Activated CD4-positive, alpha-beta T cell treated with anti-CD3 and anti-CD28 coated beads for 36 hours (primary cell): ENCODE measurements at regions of chr11 and their contacts with region 1.

Region 1: DNA sequence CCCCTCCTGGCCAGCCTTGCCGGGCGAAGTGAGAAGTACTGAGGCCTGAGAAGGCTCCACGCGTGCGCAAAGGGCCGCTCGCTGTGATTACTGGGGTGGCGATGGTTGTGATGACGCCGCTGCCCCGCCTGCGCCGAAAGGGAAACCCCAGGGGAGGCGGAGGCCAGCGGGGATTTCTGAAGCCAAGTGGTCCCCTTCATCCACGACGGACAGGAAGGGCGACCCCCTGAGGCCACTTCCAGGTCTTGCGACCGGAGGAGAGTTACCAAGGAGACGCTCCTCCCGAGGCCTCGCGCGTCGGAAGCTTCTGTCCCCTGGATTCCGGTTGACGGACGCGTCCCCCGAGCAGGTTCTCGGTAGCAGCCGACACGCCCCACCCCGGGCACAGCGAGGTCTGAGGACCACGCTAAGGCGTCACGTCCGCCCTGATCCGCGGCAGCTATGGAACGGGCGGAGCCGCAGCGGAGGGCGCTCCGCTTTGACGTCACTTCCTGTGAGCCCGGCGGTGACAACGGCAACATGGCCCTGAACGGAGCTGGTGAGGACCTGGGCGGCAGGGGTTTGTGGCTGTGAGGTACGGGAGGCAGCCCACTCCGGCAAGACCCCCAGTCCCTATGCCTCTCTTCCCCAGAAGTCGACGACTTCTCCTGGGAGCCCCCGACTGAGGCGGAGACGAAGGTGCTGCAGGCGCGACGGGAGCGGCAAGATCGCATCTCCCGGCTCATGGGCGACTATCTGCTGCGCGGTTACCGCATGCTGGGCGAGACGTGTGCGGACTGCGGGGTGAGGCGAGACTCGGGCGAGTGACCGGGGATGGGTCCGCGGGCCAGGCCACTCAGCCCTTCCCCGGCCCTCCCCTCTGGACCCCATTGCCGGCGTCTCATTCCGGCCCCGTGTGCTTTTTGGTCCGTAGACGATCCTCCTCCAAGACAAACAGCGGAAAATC is at the start of gene ZNRD2:
- DNase-seq: peak; percentile 100
- ATAC-seq: peak; percentile 75
- H3K4me3 Mint-ChIP-seq: peak within 1 kb of the TSS; percentile 97
- H3K27ac Mint-ChIP-seq: peak within 1 kb of the TSS; percentile 96
- H3K4me1 Mint-ChIP-seq: peaks cover 60% of the 10 kb centered on the region
- H3K27me3 Mint-ChIP-seq: no peaks in the 10 kb centered on the region
- total RNA-seq, gene ZNRD2: 50.7 to 56.4 TPM

Region 2: DNA sequence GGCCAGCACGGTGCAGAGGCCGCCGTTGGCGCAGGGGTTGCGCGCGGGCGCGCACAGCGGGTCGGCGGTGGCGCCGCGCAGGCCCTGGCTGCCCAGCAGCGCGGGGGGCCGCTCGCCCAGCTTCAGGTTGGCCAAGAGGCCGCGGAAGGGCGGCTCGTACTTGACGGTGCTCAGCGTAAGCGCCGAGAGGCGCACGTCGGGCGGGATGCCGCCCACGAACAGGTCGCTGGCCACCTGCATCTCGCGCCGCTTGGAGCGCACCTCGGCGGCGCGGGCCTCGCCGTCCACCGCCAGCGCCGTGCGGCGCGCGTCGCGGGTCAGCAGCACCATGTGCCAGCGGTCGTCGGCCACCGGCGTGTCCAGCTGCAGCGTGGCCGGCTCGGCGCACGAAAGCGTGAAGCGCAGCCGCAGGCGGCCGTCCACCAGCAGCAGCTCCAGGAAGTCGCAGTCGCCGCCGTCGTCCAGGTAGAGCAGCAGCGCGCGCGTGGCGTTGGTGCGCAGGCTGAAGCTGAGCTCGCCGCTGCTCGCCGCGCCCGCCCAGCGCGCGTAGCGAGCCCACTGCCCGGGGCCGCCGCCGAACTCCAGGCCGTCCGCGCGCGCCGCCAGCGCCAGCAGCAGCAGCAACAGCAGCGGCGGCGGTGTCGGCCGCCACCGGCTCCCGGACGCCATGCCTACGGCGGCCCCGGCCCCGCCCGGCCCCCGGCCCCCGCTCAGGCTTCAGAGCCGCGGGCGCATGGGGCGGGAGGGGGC is 857.0 kb before region 1 on chr11:
- CTCF ChIA-PET with region 1: no interaction called
- POLR2A ChIA-PET with region 1: no interaction called
- intact Hi-C with region 1: no loop called
- DNase-seq: peak; percentile 38
- ATAC-seq: peak; percentile 21
- H3K4me3 Mint-ChIP-seq: no peak overlapping the region
- H3K27ac Mint-ChIP-seq: no peak overlapping the region
- H3K4me1 Mint-ChIP-seq: peaks cover 13% of the 10 kb centered on the region
- H3K27me3 Mint-ChIP-seq: peaks cover 69% of the 10 kb centered on the region

Region 3: DNA sequence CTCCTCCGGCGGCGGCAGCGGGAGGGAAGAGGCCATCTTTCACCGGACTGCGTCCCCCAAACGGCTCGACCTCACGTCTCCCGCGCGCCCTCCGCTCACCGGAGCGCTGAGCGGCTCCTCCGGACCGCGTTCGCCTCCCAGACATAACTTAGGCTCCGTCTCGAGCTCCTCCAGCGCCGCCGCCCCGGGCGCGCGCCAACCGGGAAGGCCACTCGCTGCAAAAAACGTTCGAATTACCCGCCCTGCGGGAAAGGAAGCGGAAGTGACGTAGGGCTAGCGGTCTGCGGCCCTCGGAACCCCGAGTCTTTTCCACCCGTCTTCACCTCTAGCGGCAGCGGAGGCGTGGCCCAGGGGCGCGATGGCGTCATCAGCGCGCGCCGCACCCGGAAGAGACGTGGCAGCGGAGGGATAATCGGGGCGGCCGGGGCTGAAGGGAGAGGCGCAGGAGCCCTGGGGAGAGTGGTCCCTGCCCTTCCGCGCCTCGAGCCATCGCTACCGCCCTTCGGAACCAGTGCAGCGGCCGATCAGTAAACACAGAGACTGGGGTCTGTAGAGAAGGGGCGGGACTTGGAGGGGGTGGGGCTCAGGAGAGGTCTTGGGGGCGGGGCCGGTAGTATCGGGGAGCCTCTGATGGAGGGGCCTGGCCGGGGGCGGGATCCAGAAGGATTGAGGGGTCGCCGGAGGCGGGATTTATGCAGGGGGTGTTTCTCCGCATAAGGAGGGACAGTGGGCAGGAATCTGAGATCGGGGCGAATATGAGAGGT is 486.2 kb before region 1 on chr11 and contains the starts of genes CDCA5 and ZFPL1:
- CTCF ChIA-PET with region 1: no interaction called
- POLR2A ChIA-PET with region 1: no interaction called
- intact Hi-C with region 1: loop called in 1 of 2 experiments (anchors 1 kb)
- DNase-seq: peak; percentile 97
- ATAC-seq: peak; percentile 81
- H3K4me3 Mint-ChIP-seq: peak within 1 kb of the TSS; percentile 99
- H3K27ac Mint-ChIP-seq: peak within 1 kb of the TSS; percentile 98
- H3K4me1 Mint-ChIP-seq: peaks cover 41% of the 10 kb centered on the region
- H3K27me3 Mint-ChIP-seq: no peaks in the 10 kb centered on the region
- total RNA-seq, gene CDCA5: 111 to 119 TPM
- total RNA-seq, gene ZFPL1: 24.2 to 31.8 TPM

Region 4: GRCh38 chr11:65425105-65425970 is 144.9 kb before region 1 on chr11:
- CTCF ChIA-PET with region 1: interaction called, 5 read pairs
- POLR2A ChIA-PET with region 1: interaction called, 7 read pairs
- intact Hi-C with region 1: loop called (anchors 1 to 2 kb)
- DNase-seq: peak; percentile 87
- ATAC-seq: peak; percentile 18
- H3K4me3 Mint-ChIP-seq: peak overlapping the region; percentile 100
- H3K27ac Mint-ChIP-seq: peak overlapping the region; percentile 99
- H3K4me1 Mint-ChIP-seq: peaks cover 51% of the 10 kb centered on the region
- H3K27me3 Mint-ChIP-seq: peaks cover 6% of the 10 kb centered on the region

Region 5: GRCh38 chr11:65551572-65552398 is 18.5 kb before region 1 on chr11:
- CTCF ChIA-PET with region 1: interaction called, 16 read pairs
- POLR2A ChIA-PET with region 1: interaction called, 4 read pairs
- intact Hi-C with region 1: loop called (anchors 1 to 2 kb)
- DNase-seq: peak; percentile 79
- ATAC-seq: peak; percentile 51
- H3K4me3 Mint-ChIP-seq: no peak overlapping the region
- H3K27ac Mint-ChIP-seq: peak overlapping the region; percentile 59
- H3K4me1 Mint-ChIP-seq: peaks cover 70% of the 10 kb centered on the region
- H3K27me3 Mint-ChIP-seq: no peaks in the 10 kb centered on the region

Region 6: DNA sequence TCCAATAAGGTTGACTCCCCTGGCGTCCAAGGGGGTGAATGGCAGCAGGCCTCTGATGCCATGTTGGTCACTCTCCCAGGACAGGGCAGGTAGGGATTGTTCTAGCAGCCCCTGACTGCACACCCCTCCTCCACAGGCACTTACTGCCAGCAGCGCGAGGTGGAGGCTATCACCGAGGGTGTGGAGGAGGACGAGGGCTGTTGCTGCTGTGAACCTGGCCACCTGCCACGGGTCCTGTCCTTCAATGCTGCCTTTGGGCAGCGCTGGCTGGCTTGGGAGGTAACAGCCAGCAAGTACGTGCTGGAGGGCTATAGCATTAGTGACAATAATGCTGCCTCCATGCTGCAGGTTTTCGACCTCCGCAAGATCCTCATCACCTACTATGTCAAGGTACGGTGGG is 60.0 kb after region 1 on chr11:
- CTCF ChIA-PET with region 1: no interaction called
- POLR2A ChIA-PET with region 1: no interaction called
- intact Hi-C with region 1: no loop called
- DNase-seq: no peak
- ATAC-seq: no peak
- H3K4me3 Mint-ChIP-seq: no peak overlapping the region
- H3K27ac Mint-ChIP-seq: no peak overlapping the region
- H3K4me1 Mint-ChIP-seq: peaks cover 4% of the 10 kb centered on the region
- H3K27me3 Mint-ChIP-seq: no peaks in the 10 kb centered on the region

Region 7: GRCh38 chr11:65662799-65663638 is 92.8 kb after region 1 on chr11 and contains the start of gene RELA:
- CTCF ChIA-PET with region 1: interaction called, 4 read pairs
- POLR2A ChIA-PET with region 1: no interaction called
- intact Hi-C with region 1: loop called (anchors 1 to 5 kb)
- DNase-seq: peak; percentile 96
- ATAC-seq: peak; percentile 90
- H3K4me3 Mint-ChIP-seq: peak within 1 kb of the TSS; percentile 88
- H3K27ac Mint-ChIP-seq: peak within 1 kb of the TSS; percentile 97
- H3K4me1 Mint-ChIP-seq: peaks cover 41% of the 10 kb centered on the region
- H3K27me3 Mint-ChIP-seq: no peaks in the 10 kb centered on the region
- total RNA-seq, gene RELA: 76.9 to 109 TPM

Region 8: GRCh38 chr11:65776196-65776595 is 205.9 kb after region 1 on chr11:
- CTCF ChIA-PET with region 1: no interaction called
- POLR2A ChIA-PET with region 1: no interaction called
- intact Hi-C with region 1: no loop called
- DNase-seq: no peak
- ATAC-seq: no peak
- H3K4me3 Mint-ChIP-seq: no peak overlapping the region
- H3K27ac Mint-ChIP-seq: peak overlapping the region; percentile 51
- H3K4me1 Mint-ChIP-seq: peaks cover 27% of the 10 kb centered on the region
- H3K27me3 Mint-ChIP-seq: no peaks in the 10 kb centered on the region

Region 9: DNA sequence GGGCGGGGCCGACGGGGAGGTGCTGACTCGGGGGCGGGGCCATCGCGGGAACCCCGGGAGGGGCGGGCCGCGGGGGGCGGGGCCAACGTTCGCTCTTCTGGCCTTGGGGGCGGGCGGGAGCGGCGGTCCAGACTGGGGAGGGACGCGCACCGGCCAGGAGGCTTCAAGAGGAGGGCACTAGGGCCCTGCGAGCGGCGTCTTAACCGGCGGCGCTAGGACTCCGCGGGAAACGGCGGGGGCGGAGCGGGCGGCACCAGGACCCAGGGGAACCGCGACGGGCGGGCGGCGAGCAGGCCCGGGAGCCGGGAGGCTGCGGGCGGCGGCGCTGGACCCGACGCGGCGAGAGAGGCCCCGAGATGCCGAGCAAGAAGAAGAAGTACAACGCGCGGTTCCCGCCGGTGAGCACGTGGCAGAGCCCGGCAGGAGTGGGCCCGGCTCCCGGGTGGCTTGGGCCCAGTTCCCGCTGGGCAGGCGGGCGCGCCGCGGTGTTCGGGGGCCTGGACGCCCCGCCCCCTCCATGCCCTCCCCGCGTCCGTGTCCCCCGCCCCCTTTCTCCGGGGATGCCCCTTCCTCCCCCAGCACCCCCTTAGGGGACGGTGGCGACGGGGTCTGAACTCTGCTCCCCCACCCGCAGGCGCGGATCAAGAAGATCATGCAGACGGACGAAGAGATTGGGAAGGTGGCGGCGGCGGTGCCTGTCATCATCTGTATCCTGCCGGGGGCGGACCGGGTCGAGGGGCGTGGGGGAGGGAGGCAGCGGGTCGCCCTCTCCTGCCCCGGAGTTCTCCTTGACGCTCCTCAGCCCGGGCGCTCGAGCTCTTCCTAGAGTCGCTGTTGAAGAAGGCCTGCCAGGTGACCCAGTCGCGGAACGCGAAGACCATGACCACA is 349.1 kb after region 1 on chr11 and contains the start of gene DRAP1:
- CTCF ChIA-PET with region 1: no interaction called
- POLR2A ChIA-PET with region 1: no interaction called
- intact Hi-C with region 1: loop called in 1 of 2 experiments (anchors 2 kb)
- DNase-seq: peak; percentile 100
- ATAC-seq: peak; percentile 94
- H3K4me3 Mint-ChIP-seq: peak within 1 kb of the TSS; percentile 91
- H3K27ac Mint-ChIP-seq: peak within 1 kb of the TSS; percentile 88
- H3K4me1 Mint-ChIP-seq: peaks cover 35% of the 10 kb centered on the region
- H3K27me3 Mint-ChIP-seq: no peaks in the 10 kb centered on the region
- total RNA-seq, gene DRAP1: 111 to 158 TPM

Region 10: GRCh38 chr11:66288671-66289547 is 718.7 kb after region 1 on chr11 and contains the start of gene YIF1A:
- CTCF ChIA-PET with region 1: no interaction called
- POLR2A ChIA-PET with region 1: no interaction called
- intact Hi-C with region 1: loop called in 1 of 2 experiments (anchors 2 kb)
- DNase-seq: peak; percentile 99
- ATAC-seq: peak; percentile 97
- H3K4me3 Mint-ChIP-seq: peak within 1 kb of the TSS; percentile 89
- H3K27ac Mint-ChIP-seq: peak within 1 kb of the TSS; percentile 85
- H3K4me1 Mint-ChIP-seq: peaks cover 22% of the 10 kb centered on the region
- H3K27me3 Mint-ChIP-seq: peaks cover 8% of the 10 kb centered on the region
- total RNA-seq, gene YIF1A: 47.5 to 49.8 TPM